IMR-90 (cell line): ENCODE measurements at regions of chr1 and their contacts with region 1.

Region 1: GRCh38 chr1:202471246-202471645 is 122.7 kb downstream of the PPP1R12B start:
- DNase-seq: no peak
- ATAC-seq: no peak
- H3K4me3 ChIP-seq: no peak overlapping the region
- H3K27ac ChIP-seq: no peak overlapping the region
- H3K4me1 ChIP-seq: no peaks in the 10 kb centered on the region; the same call in 1 of the 2 replicates
- H3K27me3 ChIP-seq: no peaks in the 10 kb centered on the region
- CTCF ChIP-seq: no peak
- POLR2A ChIP-seq: no peak
- RAD21 ChIP-seq: no peak

Region 2: GRCh38 chr1:202728951-202729350 is 257.7 kb after region 1 on chr1:
- CTCF ChIA-PET with region 1: no interaction called
- POLR2A ChIA-PET with region 1: interaction called, 11 read pairs
- dilution Hi-C with region 1: no loop called
- in situ Hi-C with region 1: no loop called
- intact Hi-C with region 1: no loop called
- DNase-seq: no peak
- ATAC-seq: no peak
- H3K4me3 ChIP-seq: no peak overlapping the region
- H3K27ac ChIP-seq: no peak overlapping the region
- H3K4me1 ChIP-seq: no peaks in the 10 kb centered on the region
- H3K27me3 ChIP-seq: no peaks in the 10 kb centered on the region
- CTCF ChIP-seq: no peak
- POLR2A ChIP-seq: no peak
- RAD21 ChIP-seq: no peak